WTC11 (cell line): ENCODE measurements at regions of chr11 and their contacts with region 1.

Region 1: GRCh38 chr11:70141486-70142220 is 61.4 kb upstream of the FADD start:
- DNase-seq: no peak
- ATAC-seq: peak; percentile 41
- H3K4me3 Mint-ChIP-seq: peak overlapping the region; percentile 57
- H3K27ac Mint-ChIP-seq: no peak overlapping the region
- H3K4me1 Mint-ChIP-seq: peaks cover 38% of the 10 kb centered on the region
- H3K27me3 Mint-ChIP-seq: peaks cover 28% of the 10 kb centered on the region
- CTCF ChIP-seq: no peak

Region 2: GRCh38 chr11:69972351-69972802 is 169.3 kb before region 1 on chr11:
- CTCF ChIA-PET with region 1: no interaction called
- POLR2A ChIA-PET with region 1: no interaction called
- DNase-seq: no peak
- ATAC-seq: no peak
- H3K4me3 Mint-ChIP-seq: no peak overlapping the region
- H3K27ac Mint-ChIP-seq: 0 out of 2 replicates have a peak overlapping the region, but pooled peaks have one; percentile 20
- H3K4me1 Mint-ChIP-seq: peaks cover 14% of the 10 kb centered on the region
- H3K27me3 Mint-ChIP-seq: no peaks in the 10 kb centered on the region
- CTCF ChIP-seq: no peak

Region 3: GRCh38 chr11:70082829-70083228 is 58.8 kb before region 1 on chr11:
- CTCF ChIA-PET with region 1: interaction called, 15 read pairs
- POLR2A ChIA-PET with region 1: no interaction called
- DNase-seq: no peak
- ATAC-seq: no peak
- H3K4me3 Mint-ChIP-seq: no peak overlapping the region
- H3K27ac Mint-ChIP-seq: no peak overlapping the region
- H3K4me1 Mint-ChIP-seq: peaks cover 3% of the 10 kb centered on the region; the same call in 1 of the 2 replicates
- H3K27me3 Mint-ChIP-seq: peaks cover 29% of the 10 kb centered on the region
- CTCF ChIP-seq: no peak

Region 4: GRCh38 chr11:70128435-70128906 is 13.2 kb before region 1 on chr11:
- CTCF ChIA-PET with region 1: interaction called, 10 read pairs
- POLR2A ChIA-PET with region 1: no interaction called
- DNase-seq: peak; percentile 47
- ATAC-seq: peak; percentile 58
- H3K4me3 Mint-ChIP-seq: no peak overlapping the region
- H3K27ac Mint-ChIP-seq: peak overlapping the region; percentile 87
- H3K4me1 Mint-ChIP-seq: peaks cover 21% of the 10 kb centered on the region
- H3K27me3 Mint-ChIP-seq: no peaks in the 10 kb centered on the region
- CTCF ChIP-seq: no peak